Ovary (tissue), 10 donors: ENCODE measurements at regions of chr2 and their contacts with region 1.

Region 1: DNA sequence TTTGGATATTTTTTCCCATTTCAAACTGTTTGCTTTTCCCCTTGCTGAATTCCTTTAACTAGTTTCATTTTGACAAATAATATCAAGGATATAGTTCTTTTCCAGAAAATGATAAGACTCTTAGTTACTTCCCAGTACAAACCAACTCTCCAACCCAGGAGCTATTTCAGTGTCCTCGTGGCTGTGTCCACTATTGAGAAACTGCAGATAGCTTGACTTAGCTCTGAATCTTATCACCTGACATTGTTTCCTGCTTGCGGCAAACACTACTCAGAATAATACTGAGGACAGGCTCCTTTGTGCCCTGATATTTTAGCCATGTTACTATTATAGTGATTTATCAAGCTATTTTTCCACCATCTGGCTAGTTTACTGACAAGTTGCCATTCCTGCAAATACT is 74.6 kb downstream of the KLF7 start:
- DNase-seq: no peak
- H3K4me3 ChIP-seq: no peak overlapping the region
- H3K27ac ChIP-seq: no peak overlapping the region
- H3K4me1 ChIP-seq: peaks cover 3% of the 10 kb centered on the region
- H3K27me3 ChIP-seq: no peaks in the 10 kb centered on the region
- CTCF ChIP-seq: no peak
- EP300 ChIP-seq: no peak
- POLR2A ChIP-seq: no peak

Region 2: DNA sequence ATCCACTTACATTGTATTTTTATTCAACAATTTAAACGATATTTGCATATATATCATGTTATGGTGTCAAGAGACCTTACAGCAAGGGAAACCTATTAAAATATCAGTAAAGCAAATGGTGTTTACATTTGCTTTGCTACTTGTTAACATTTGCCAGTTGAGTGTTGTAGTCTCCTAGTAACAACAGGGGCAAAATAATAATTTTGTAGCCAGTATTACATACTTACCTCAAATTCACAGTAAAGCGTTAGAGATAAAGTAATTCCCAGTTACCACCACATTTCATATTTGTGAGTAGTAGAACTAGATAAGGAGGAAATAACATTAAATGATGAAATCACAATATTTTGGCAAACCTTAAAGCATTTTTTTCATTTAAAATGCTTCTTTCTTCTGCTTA is 254.5 kb before region 1 on chr2:
- intact Hi-C with region 1: loop called in 1 of 4 experiments (anchors 5 kb)
- DNase-seq: no peak
- H3K4me3 ChIP-seq: no peak overlapping the region
- H3K27ac ChIP-seq: no peak overlapping the region
- H3K4me1 ChIP-seq: no peaks in the 10 kb centered on the region
- H3K27me3 ChIP-seq: no peaks in the 10 kb centered on the region
- CTCF ChIP-seq: no peak
- EP300 ChIP-seq: no peak
- POLR2A ChIP-seq: no peak